PC-9 (cell line): ENCODE measurements at regions of chr4 and their contacts with region 1.

Region 1: GRCh38 chr4:39446751-39447573 is 11.8 kb downstream of the RPL9 start:
- DNase-seq: peak in 1 of 2 experiments; percentile 29
- H3K4me3 ChIP-seq: no peak overlapping the region
- H3K27ac ChIP-seq: no peak overlapping the region
- H3K4me1 ChIP-seq: no peaks in the 10 kb centered on the region
- H3K27me3 ChIP-seq: no peaks in the 10 kb centered on the region
- CTCF ChIP-seq: no peak

Region 2: GRCh38 chr4:39062094-39062769 is 384.7 kb before region 1 on chr4 and contains the start of gene KLHL5:
- CTCF ChIA-PET with region 1: no interaction called
- POLR2A ChIA-PET with region 1: interaction called, 10 read pairs
- intact Hi-C with region 1: no loop called
- DNase-seq: no peak
- H3K4me3 ChIP-seq: no peak within 1 kb of the TSS
- H3K27ac ChIP-seq: no peak within 1 kb of the TSS
- H3K4me1 ChIP-seq: no peaks in the 10 kb centered on the region
- H3K27me3 ChIP-seq: no peaks in the 10 kb centered on the region
- CTCF ChIP-seq: no peak
- total RNA-seq, gene KLHL5: 115 and 117 TPM in 2 replicates